Colonic mucosa (tissue), 4 donors: ENCODE measurements at regions of chr15 and their contacts with region 1.

Region 1: DNA sequence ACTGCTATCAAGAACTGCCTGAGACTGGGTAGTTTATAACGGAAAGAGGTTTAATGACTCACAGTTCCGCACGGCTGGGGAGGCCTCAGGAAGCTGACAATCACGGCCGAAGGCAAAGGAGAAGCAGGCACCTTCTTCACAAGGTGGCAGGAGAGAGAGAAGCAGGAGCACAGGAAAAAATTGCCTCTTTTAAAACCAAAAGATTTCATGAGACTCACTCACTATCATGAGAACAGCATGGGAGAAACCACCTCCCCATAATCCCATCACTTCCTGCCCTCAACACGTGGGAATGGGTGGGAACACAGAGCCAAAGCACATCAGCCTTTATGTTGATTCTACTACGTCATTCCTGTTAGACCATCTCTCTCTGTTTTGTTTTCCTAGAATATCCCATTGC is 650.9 kb upstream of the SEMA6D start:
- DNase-seq: no peak
- H3K4me3 ChIP-seq: no peak overlapping the region
- H3K27ac ChIP-seq: no peak overlapping the region
- H3K4me1 ChIP-seq: no peaks in the 10 kb centered on the region
- H3K27me3 ChIP-seq: no peaks in the 10 kb centered on the region
- CTCF ChIP-seq: no peak

Region 2: DNA sequence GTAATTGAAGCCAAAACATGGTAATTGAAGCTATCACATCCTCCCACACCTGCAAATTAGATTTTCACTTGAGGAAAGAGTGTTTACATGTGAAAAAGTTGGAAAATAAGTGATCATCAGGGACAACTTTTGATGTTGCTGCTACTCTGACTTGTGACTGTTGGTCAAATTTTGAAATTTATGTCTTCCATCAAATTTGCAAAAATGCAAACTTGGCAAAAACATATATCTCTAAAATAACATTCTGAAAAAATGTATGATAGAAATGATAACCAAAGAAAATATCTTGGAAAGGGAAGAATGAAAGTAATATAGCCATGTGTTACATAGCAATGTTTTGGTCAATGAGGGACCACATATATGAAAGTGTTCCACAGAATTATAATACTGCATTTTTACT is 52.9 kb before region 1 on chr15:
- intact Hi-C with region 1: no loop called
- DNase-seq: no peak
- H3K4me3 ChIP-seq: no peak overlapping the region
- H3K27ac ChIP-seq: no peak overlapping the region
- H3K4me1 ChIP-seq: no peaks in the 10 kb centered on the region
- H3K27me3 ChIP-seq: no peaks in the 10 kb centered on the region
- CTCF ChIP-seq: no peak

Region 3: GRCh38 chr15:47139965-47140364 is 73.6 kb after region 1 on chr15:
- intact Hi-C with region 1: loop called (anchors 10 kb)
- DNase-seq: no peak
- H3K4me3 ChIP-seq: no peak overlapping the region
- H3K27ac ChIP-seq: no peak overlapping the region
- H3K4me1 ChIP-seq: no peaks in the 10 kb centered on the region
- H3K27me3 ChIP-seq: no peaks in the 10 kb centered on the region
- CTCF ChIP-seq: no peak